Caco-2 (cell line): ENCODE measurements at regions of chr6 and their contacts with region 1.

Region 1: DNA sequence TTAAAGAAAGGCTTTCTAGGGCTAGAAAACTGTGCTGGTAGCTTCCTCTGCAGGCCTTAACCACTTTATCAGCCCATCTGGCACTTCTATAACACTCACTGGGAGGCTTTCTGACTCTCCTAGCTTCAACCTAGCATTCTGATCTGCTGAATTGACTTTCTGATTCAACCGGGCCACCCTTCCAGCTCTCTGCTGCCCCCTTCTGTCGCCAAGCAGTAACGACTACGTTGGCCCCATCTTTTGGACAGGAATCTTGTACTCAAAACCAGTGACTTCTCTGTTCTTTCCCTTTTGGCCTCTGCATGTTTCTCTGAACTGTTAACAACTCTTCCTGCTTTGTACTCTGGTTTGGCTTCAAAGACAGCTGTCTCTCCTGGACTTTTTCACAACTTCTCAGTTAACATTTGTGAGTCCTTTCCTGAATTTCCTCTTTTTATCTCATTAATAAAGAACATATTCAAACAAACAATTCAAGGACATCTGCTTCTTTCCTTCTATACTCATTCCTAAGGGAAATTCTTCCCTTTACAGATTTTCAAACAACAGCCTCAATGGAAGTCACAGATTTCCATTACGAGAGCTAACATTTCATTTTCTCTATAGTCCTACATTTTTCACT is 43.9 kb upstream of the FAM135A start:
- DNase-seq: peak; percentile 58 to 74
- H3K4me3 ChIP-seq: no peak overlapping the region
- H3K4me3 Mint-ChIP-seq: no peak overlapping the region
- H3K27ac Mint-ChIP-seq: no peak overlapping the region
- H3K4me1 ChIP-seq: no peaks in the 10 kb centered on the region
- H3K4me1 Mint-ChIP-seq: peaks cover 1% of the 10 kb centered on the region
- H3K27me3 ChIP-seq: no peaks in the 10 kb centered on the region
- H3K27me3 Mint-ChIP-seq: peaks cover 9% of the 10 kb centered on the region
- CTCF ChIP-seq: peak; percentile 75 to 94

Region 2: GRCh38 chr6:70270287-70271005 is 99.0 kb before region 1 on chr6:
- CTCF ChIA-PET with region 1: interaction called, 14 read pairs
- POLR2A ChIA-PET with region 1: no interaction called
- intact Hi-C with region 1: no loop called
- DNase-seq: no peak
- H3K4me3 ChIP-seq: no peak overlapping the region
- H3K4me3 Mint-ChIP-seq: no peak overlapping the region
- H3K27ac Mint-ChIP-seq: no peak overlapping the region
- H3K4me1 ChIP-seq: no peaks in the 10 kb centered on the region
- H3K4me1 Mint-ChIP-seq: no peaks in the 10 kb centered on the region
- H3K27me3 ChIP-seq: no peaks in the 10 kb centered on the region
- H3K27me3 Mint-ChIP-seq: peaks cover 3% of the 10 kb centered on the region
- CTCF ChIP-seq: no peak

Region 3: GRCh38 chr6:70398783-70399728 is 29.6 kb after region 1 on chr6:
- CTCF ChIA-PET with region 1: interaction called, 5 read pairs
- POLR2A ChIA-PET with region 1: no interaction called
- intact Hi-C with region 1: loop called (anchors 2 kb)
- DNase-seq: peak; percentile 63 to 74
- H3K4me3 ChIP-seq: no peak overlapping the region
- H3K4me3 Mint-ChIP-seq: peak overlapping the region; percentile 60
- H3K27ac Mint-ChIP-seq: peak overlapping the region; percentile 71
- H3K4me1 ChIP-seq: peaks cover 22% of the 10 kb centered on the region
- H3K4me1 Mint-ChIP-seq: peaks cover 25% of the 10 kb centered on the region
- H3K27me3 ChIP-seq: no peaks in the 10 kb centered on the region
- H3K27me3 Mint-ChIP-seq: no peaks in the 10 kb centered on the region
- CTCF ChIP-seq: no peak

Region 4: DNA sequence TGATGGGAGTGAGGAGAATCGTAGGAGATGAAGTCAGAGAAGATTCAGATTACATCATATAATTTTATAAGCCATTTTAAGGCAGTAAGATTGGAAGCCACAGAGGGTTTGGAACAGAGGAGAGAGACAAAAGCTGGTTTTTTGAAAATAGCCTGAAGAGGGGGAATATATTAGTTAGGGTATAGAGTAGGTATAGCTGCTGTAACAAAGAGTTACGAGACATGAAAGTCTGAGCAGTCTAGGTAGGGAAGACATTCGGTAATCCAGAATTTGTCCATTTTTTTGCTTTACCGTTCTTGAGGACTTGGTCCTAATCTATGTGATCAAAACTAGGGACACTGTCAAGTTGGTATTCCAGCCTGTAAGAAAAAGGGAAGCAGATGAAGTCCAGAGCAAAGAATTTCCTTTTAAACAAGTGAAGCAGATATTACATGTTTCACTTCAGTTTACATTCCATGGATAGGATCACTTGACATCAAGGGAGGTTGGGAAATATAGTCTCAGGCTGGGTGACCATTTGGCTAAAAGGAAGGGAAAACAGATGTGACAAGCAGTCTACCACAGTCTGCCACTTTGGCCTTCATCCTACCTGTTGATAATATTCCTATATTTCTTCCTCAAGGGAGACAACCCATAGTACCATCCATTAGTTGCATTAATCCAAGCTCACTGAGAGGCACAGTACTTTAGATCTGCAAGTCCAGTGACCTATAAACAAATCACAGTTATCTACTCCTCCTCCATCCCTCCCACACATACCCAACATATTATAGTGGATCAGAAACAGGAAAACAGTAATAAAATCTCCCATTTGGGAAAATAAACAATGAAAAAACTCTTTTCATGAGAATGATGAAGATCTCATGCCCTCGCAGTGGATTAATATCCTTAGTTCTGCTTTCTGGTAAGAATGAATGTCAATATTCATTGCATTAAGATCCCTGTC is 54.0 kb after region 1 on chr6:
- CTCF ChIA-PET with region 1: no interaction called
- POLR2A ChIA-PET with region 1: no interaction called
- intact Hi-C with region 1: loop called (anchors 1 kb)
- DNase-seq: no peak
- H3K4me3 ChIP-seq: no peak overlapping the region
- H3K4me3 Mint-ChIP-seq: no peak overlapping the region
- H3K27ac Mint-ChIP-seq: no peak overlapping the region
- H3K4me1 ChIP-seq: peaks cover 6% of the 10 kb centered on the region
- H3K4me1 Mint-ChIP-seq: no peaks in the 10 kb centered on the region
- H3K27me3 ChIP-seq: no peaks in the 10 kb centered on the region
- H3K27me3 Mint-ChIP-seq: no peaks in the 10 kb centered on the region
- CTCF ChIP-seq: no peak

Region 5: DNA sequence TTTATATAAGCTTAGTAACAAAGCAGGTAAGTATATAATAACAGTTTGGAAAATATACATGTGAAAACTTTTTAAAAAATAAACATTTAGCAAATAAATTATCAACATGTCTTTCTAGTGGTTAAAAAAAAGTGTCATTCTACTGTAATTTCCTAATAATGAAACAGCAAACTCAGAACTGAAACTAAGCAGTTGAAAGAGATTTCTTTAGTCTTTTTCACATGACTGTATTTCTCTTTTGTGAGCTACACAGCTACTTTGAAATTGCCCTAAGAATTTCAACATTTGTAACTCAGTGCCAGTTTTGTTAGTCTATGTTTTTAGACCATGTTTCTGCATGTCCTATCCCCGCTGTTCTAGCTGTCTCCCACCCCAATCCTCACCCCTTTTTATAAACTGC is 168.9 kb after region 1 on chr6:
- CTCF ChIA-PET with region 1: no interaction called
- POLR2A ChIA-PET with region 1: no interaction called
- intact Hi-C with region 1: no loop called
- DNase-seq: no peak
- H3K4me3 ChIP-seq: no peak overlapping the region
- H3K4me3 Mint-ChIP-seq: no peak overlapping the region
- H3K27ac Mint-ChIP-seq: no peak overlapping the region
- H3K4me1 ChIP-seq: no peaks in the 10 kb centered on the region
- H3K4me1 Mint-ChIP-seq: no peaks in the 10 kb centered on the region
- H3K27me3 ChIP-seq: no peaks in the 10 kb centered on the region
- H3K27me3 Mint-ChIP-seq: no peaks in the 10 kb centered on the region
- CTCF ChIP-seq: no peak

Region 6: DNA sequence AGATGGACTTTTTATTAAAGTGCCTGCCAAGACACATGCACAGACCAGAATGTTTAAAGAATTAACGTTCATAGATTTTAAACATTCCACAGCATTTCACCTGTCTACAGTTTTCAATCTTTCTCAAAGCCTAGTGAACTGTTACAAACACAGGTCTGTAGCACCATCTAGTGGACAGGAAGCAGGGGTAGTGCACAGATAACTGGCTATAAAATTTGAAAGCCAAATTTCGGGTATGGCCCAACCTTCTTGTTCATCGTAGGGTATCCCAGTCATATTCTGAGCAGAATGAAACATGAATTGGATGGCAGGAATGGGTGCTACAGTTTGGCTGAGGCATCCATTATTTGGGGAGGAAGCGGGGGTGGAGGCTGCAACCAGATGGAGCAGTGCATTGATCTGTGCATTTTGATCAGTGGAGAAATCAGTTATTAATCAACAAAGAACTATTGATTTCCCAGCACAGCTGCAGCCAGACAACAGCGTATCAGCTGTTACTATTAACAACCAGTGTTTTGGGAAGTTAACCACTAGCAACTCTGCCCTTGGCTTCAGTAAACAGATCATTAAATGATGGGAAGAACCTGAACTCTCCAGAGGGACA is 643.5 kb after region 1 on chr6:
- CTCF ChIA-PET with region 1: interaction called, 4 read pairs
- POLR2A ChIA-PET with region 1: no interaction called
- intact Hi-C with region 1: loop called (anchors 2 kb)
- DNase-seq: peak in 1 of 2 experiments; percentile 50
- H3K4me3 ChIP-seq: no peak overlapping the region
- H3K4me3 Mint-ChIP-seq: no peak overlapping the region
- H3K27ac Mint-ChIP-seq: no peak overlapping the region
- H3K4me1 ChIP-seq: no peaks in the 10 kb centered on the region
- H3K4me1 Mint-ChIP-seq: no peaks in the 10 kb centered on the region
- H3K27me3 ChIP-seq: no peaks in the 10 kb centered on the region
- H3K27me3 Mint-ChIP-seq: no peaks in the 10 kb centered on the region
- CTCF ChIP-seq: peak; percentile 74 to 77